Left ventricle myocardium superior (tissue), 1 donor: ENCODE measurements at regions of chr6 and their contacts with region 1.

Region 1: GRCh38 chr6:121584586-121585369 is 149.3 kb downstream of the GJA1 start:
- DNase-seq: no peak
- ATAC-seq: peak; percentile 75

Region 2: DNA sequence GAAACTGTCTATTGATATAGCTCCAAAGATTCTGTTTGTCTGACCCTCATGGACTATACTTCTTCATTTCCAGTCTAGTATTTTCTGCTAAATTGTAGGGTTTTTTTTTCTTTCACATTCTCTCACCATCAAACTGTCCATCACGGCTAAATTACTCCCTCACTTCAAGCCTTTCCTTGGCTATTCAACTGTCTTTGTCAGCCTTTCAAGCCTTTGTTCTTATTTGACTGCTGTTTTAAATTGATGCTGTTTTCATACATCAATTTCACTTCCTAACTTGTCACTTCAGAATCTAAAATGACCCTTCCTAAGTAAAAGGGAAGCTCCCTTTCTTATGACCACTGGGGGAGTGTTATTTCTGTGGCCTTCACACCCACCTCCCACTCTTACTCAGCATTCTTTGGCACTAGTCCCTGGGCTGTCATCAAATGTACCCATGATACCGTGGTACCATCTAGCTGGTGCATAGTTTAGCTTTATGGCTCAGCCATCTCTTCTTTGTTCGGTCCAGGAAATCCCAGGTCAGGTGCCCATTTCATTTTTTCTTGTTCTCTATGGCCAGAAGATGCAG is 140.7 kb before region 1 on chr6:
- intact Hi-C with region 1: loop called (anchors 5 kb)
- DNase-seq: no peak
- ATAC-seq: peak; percentile 84